Endothelial cell of umbilical vein (primary cell): ENCODE measurements at regions of chr3 and their contacts with region 1.

Region 1: DNA sequence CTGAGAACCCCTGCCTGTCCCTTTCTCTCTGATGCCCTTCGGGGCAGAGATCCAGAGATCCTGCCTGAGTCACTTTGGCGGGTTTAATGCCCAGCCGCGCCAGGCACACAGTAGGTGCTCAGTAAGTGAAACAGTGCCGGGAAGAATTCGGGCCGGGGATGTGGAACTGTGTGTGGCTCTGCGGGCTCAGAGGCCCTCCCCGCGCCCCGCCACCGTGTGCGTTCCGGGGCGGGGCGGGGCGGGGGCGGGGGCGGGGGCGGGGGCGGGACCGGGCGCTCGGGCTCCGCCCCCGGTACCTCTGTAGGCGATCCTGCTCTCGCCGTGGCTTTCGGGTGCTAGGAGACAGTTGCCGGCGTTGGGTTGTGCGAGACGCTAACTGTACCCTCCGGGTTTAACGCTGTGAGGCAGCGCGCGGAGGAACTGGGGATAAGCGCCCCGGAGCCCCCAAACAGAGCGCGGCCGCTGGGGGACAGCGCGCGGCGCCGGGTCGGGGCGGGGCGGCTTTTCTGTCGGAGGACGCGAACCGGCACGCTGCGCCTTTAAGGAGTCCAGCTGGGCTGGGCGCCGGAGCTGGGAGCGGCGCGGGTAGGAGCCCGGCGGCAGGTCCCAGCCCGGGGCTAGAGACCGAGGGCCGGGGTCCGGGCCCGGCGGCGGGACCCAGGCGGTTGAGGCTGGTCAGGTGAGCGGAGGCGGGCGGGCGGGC is at the start of gene ABHD6:
- DNase-seq: peak; percentile 66
- H3K4me3 ChIP-seq: peak within 1 kb of the TSS; percentile 65 to 73 (median 71)
- H3K27ac ChIP-seq: peak within 1 kb of the TSS; percentile 25
- H3K4me1 ChIP-seq: peaks cover 6% of the 10 kb centered on the region
- H3K27me3 ChIP-seq: peaks cover 4 to 6% of the 10 kb centered on the region in 2 experiments
- CTCF ChIP-seq: peak in 1 of 2 donors; percentile 17
- POLR2A ChIP-seq: peak; percentile 41
- total RNA-seq, gene ABHD6: 5.4 and 5.8 TPM in 2 replicates

Region 2: GRCh38 chr3:58271901-58272501 is 34.6 kb after region 1 on chr3:
- CTCF ChIA-PET with region 1: interaction called, 6 read pairs
- POLR2A ChIA-PET with region 1: no interaction called
- dilution Hi-C with region 1: no loop called
- intact Hi-C with region 1: loop called (anchors 2 kb)
- DNase-seq: peak; percentile 79
- H3K4me3 ChIP-seq: no peak overlapping the region
- H3K27ac ChIP-seq: peak overlapping the region; percentile 55
- H3K4me1 ChIP-seq: peaks cover 19% of the 10 kb centered on the region
- H3K27me3 ChIP-seq: no peaks in the 10 kb centered on the region
- CTCF ChIP-seq: no peak
- POLR2A ChIP-seq: no peak

Region 3: DNA sequence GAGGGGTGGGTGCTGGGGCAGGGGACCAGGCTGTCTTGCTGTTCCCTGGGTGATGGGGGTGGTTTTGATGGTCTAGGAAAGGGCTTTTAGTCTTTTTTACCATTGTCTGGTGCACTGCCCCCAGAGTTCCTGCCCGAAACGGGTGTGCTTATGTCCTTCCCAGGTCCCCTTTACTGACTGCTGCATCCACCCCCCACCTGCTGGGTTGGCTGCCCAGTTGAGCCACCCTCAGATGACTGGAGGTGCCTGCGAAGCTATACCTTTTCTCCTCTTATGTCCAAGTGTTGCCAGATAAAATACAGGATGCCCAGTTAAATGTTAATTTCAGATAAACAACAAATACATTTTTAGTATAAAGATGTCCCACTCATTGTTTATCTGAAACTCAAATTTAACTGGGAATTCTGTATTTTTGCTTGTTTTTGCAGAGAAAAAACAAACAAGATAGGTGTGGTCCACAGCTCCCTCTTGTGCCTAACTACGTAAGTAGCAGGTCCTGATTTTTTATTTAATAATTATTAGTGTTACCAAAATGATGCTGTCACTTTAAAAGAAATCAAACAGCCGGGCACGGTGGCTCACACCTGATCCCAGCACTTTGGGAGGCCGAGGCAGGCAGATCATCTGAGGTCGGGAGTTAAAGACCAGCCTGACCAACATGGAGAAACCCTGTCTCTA is 62.6 kb after region 1 on chr3:
- CTCF ChIA-PET with region 1: interaction called, 19 read pairs
- POLR2A ChIA-PET with region 1: no interaction called
- dilution Hi-C with region 1: no loop called
- intact Hi-C with region 1: loop called (anchors 1 kb)
- DNase-seq: peak; percentile 70
- H3K4me3 ChIP-seq: no peak overlapping the region
- H3K27ac ChIP-seq: no peak overlapping the region
- H3K4me1 ChIP-seq: no peaks in the 10 kb centered on the region
- H3K27me3 ChIP-seq: peaks cover 17 to 18% of the 10 kb centered on the region in 2 experiments
- CTCF ChIP-seq: peak; percentile 33 to 37
- POLR2A ChIP-seq: no peak